Activated CD8-positive, alpha-beta T cell treated with anti-CD3 and anti-CD28 coated beads for 36 hours (primary cell): ENCODE measurements at regions of chr18 and their contacts with region 1.

Region 1: GRCh38 chr18:58768293-58768974 is 96.2 kb upstream of the ZNF532 start:
- DNase-seq: peak; percentile 83
- ATAC-seq: peak; percentile 92
- H3K4me3 Mint-ChIP-seq: no peak overlapping the region
- H3K27ac Mint-ChIP-seq: no peak overlapping the region
- H3K4me1 Mint-ChIP-seq: peaks cover 5% of the 10 kb centered on the region
- H3K27me3 Mint-ChIP-seq: peaks cover 42% of the 10 kb centered on the region
- CTCF ChIP-seq: peak; percentile 65

Region 2: DNA sequence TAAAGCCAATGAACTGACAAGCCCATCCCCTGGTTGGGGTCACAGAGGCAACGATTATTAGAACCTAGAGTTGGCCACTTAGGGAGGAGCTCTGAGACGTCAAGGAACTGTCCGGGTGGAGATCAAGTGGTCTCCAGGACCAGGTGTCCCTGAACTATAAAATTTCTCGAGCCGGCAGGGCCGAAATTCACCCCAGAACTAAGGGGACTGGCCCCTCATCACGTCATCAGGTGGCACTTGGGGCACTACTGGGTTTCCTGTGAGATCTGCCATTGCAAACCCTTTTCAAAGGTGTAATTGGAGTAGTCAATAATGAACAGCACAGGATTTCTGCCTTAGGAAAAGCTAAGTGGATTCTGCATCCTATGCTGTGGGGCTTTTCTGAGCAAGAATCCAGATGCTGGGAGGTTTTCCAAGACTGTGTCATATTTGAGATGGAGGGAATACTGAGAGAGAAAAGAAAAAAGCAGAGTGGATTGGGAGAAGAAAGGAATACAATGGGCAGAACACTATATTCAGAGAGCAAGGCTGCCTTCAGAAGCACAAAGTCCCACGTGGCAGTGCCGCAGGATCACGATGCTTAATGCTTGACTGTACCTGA is 253.2 kb before region 1 on chr18:
- CTCF ChIA-PET with region 1: interaction called, 29 read pairs
- POLR2A ChIA-PET with region 1: interaction called, 3 read pairs
- intact Hi-C with region 1: no loop called
- DNase-seq: no peak
- ATAC-seq: no peak
- H3K4me3 Mint-ChIP-seq: no peak overlapping the region
- H3K27ac Mint-ChIP-seq: no peak overlapping the region
- H3K4me1 Mint-ChIP-seq: no peaks in the 10 kb centered on the region
- H3K27me3 Mint-ChIP-seq: peaks cover 2% of the 10 kb centered on the region
- CTCF ChIP-seq: no peak

Region 3: GRCh38 chr18:58615140-58616132 is 153.0 kb before region 1 on chr18:
- CTCF ChIA-PET with region 1: interaction called, 12 read pairs
- POLR2A ChIA-PET with region 1: no interaction called
- intact Hi-C with region 1: no loop called
- DNase-seq: peak; percentile 89
- ATAC-seq: peak; percentile 97
- H3K4me3 Mint-ChIP-seq: peak overlapping the region; percentile 49
- H3K27ac Mint-ChIP-seq: peak overlapping the region; percentile 96
- H3K4me1 Mint-ChIP-seq: peaks cover 39% of the 10 kb centered on the region
- H3K27me3 Mint-ChIP-seq: no peaks in the 10 kb centered on the region
- CTCF ChIP-seq: no peak

Region 4: GRCh38 chr18:58687871-58688308 is 80.5 kb before region 1 on chr18:
- CTCF ChIA-PET with region 1: interaction called, 16 read pairs
- POLR2A ChIA-PET with region 1: no interaction called
- intact Hi-C with region 1: no loop called
- DNase-seq: peak; percentile 75
- ATAC-seq: peak; percentile 91
- H3K4me3 Mint-ChIP-seq: peak overlapping the region; percentile 61
- H3K27ac Mint-ChIP-seq: peak overlapping the region; percentile 94
- H3K4me1 Mint-ChIP-seq: peaks cover 69% of the 10 kb centered on the region
- H3K27me3 Mint-ChIP-seq: no peaks in the 10 kb centered on the region
- CTCF ChIP-seq: no peak

Region 5: DNA sequence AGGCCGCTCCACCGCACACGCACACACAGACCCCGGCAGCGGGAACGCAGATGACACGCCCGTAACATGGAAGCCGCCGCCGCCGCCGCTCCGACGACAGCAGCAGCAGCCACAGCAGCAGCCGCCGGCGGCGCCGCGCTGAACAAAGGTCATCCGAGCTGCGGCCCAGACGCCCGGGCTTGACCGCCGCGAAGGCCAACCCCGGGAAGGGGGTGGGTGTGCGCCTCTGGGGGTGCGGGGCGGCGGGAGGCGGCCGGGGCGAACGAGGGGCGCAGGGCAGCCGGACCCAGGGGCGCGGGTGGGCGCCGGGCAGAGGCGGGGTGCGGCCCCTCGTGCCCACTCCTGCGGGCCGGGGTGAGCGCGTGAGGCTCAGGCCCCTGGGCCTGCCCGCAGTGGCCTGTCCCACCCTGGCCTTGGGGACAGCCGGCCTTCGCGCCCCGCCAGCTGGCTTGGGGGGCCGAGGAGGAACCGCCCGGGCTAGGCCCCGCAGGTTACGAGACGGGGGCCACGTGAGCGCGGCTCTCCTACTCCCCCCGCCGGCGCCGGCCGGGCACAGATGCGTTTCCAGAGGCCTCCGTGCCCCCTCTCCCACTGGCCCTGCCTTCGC is 95.2 kb after region 1 on chr18:
- CTCF ChIA-PET with region 1: no interaction called
- POLR2A ChIA-PET with region 1: no interaction called
- intact Hi-C with region 1: no loop called
- DNase-seq: peak; percentile 31
- ATAC-seq: peak; percentile 37
- H3K4me3 Mint-ChIP-seq: peak overlapping the region; percentile 38
- H3K27ac Mint-ChIP-seq: no peak overlapping the region
- H3K4me1 Mint-ChIP-seq: peaks cover 8% of the 10 kb centered on the region
- H3K27me3 Mint-ChIP-seq: peaks cover 64% of the 10 kb centered on the region
- CTCF ChIP-seq: no peak

Region 6: GRCh38 chr18:58967751-58968254 is 199.4 kb after region 1 on chr18:
- CTCF ChIA-PET with region 1: no interaction called
- POLR2A ChIA-PET with region 1: no interaction called
- intact Hi-C with region 1: no loop called
- DNase-seq: no peak
- ATAC-seq: no peak
- H3K4me3 Mint-ChIP-seq: no peak overlapping the region
- H3K27ac Mint-ChIP-seq: no peak overlapping the region
- H3K4me1 Mint-ChIP-seq: peaks cover 2% of the 10 kb centered on the region
- H3K27me3 Mint-ChIP-seq: peaks cover 5% of the 10 kb centered on the region
- CTCF ChIP-seq: no peak

Region 7: GRCh38 chr18:59063300-59063906 is 295.0 kb after region 1 on chr18:
- CTCF ChIA-PET with region 1: interaction called, 76 read pairs
- POLR2A ChIA-PET with region 1: no interaction called
- intact Hi-C with region 1: no loop called
- DNase-seq: no peak
- ATAC-seq: no peak
- H3K4me3 Mint-ChIP-seq: no peak overlapping the region
- H3K27ac Mint-ChIP-seq: no peak overlapping the region
- H3K4me1 Mint-ChIP-seq: no peaks in the 10 kb centered on the region
- H3K27me3 Mint-ChIP-seq: peaks cover 19% of the 10 kb centered on the region
- CTCF ChIP-seq: no peak